Activated CD4-positive, alpha-beta memory T cell treated with anti-CD3 and anti-CD28 coated beads for 36 hours (primary cell): ENCODE measurements at regions of chr2 and their contacts with region 1.

Region 1: DNA sequence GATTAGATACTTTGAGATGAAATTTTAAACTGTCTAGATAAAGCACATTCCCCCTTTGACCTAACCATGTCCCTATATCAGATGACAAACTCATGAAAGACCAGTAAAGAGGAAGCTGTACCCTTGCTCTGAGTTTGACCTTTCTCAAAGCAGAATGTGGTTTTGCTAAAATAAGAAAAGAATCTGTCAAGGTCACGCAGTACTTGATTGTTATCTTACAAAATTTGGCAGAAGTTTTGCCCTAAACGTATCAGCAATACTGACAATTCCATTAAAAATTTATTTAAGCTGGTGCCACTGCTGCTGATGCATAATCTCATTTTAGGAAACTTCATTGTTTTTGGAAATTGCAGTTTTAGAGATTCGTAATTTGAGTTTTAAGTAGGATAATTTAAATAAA is 31.2 kb upstream of the GALM start:
- DNase-seq: no peak
- H3K4me3 Mint-ChIP-seq: no peak overlapping the region
- H3K27ac Mint-ChIP-seq: no peak overlapping the region
- H3K4me1 Mint-ChIP-seq: peaks cover 29% of the 10 kb centered on the region
- H3K27me3 Mint-ChIP-seq: no peaks in the 10 kb centered on the region

Region 2: DNA sequence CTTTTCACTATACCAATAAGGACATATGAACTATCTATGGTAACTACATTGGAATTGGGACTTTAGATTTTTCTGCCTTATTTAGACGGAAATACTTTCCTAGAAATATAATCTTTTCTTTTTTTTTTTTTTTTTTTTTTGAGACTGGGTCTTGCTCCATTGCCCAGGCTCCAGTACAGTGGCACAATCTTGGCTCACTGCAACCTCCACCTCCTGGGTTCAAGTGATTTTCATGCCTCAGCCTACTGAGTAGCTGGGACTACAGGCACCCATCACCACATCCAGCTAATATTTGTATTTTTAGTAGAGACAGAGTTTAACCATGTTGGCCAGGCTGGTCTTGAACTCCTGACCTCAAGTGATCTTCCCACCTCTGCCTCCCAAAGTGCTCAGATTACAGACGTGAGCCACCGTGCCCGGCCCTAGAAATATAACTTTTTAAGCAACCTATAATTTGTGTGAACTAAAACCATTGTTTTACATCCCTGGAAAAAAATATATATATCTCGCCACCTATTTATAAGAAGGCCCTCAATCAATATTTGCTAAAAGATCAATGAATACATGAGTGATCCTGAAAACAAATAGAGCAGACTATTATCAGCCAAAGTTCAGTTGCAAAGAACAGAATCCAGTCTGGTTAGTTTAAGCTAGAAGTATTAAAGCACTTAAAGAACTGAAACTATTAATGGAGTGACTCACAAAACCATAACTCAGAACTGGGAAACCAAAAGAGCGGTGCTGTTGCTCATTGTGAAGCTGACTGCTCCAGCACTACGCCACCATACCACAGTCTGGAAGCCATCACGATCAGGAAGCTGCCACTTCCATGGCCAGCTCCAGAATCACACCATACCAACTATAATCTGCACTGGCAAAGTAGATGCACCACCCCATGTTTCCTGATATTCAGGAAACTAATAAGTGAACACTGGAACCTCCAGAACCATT is 23.6 kb before region 1 on chr2:
- CTCF ChIA-PET with region 1: no interaction called
- POLR2A ChIA-PET with region 1: no interaction called
- intact Hi-C with region 1: loop called (anchors 2 kb)
- DNase-seq: peak; percentile 57
- H3K4me3 Mint-ChIP-seq: peak overlapping the region; percentile 10
- H3K27ac Mint-ChIP-seq: peak overlapping the region; percentile 31
- H3K4me1 Mint-ChIP-seq: peaks cover 69% of the 10 kb centered on the region
- H3K27me3 Mint-ChIP-seq: no peaks in the 10 kb centered on the region